ENCODE measurements at regions of chr11 and their contacts with region 1.

Region 1: GRCh38 chr11:122642472-122642922 is 13.0 kb upstream of the UBASH3B start:
- DNase-seq: peak; percentile 41 to 98
- H3K4me3 ChIP-seq: peak overlapping the region; percentile 26; the same call in 1 of the 2 replicates
- H3K27ac ChIP-seq: peak overlapping the region; percentile 88
- H3K4me1 ChIP-seq: peaks cover 49% of the 10 kb centered on the region
- H3K27me3 ChIP-seq: no peaks in the 10 kb centered on the region
- CTCF ChIP-seq: no peak

Region 2: DNA sequence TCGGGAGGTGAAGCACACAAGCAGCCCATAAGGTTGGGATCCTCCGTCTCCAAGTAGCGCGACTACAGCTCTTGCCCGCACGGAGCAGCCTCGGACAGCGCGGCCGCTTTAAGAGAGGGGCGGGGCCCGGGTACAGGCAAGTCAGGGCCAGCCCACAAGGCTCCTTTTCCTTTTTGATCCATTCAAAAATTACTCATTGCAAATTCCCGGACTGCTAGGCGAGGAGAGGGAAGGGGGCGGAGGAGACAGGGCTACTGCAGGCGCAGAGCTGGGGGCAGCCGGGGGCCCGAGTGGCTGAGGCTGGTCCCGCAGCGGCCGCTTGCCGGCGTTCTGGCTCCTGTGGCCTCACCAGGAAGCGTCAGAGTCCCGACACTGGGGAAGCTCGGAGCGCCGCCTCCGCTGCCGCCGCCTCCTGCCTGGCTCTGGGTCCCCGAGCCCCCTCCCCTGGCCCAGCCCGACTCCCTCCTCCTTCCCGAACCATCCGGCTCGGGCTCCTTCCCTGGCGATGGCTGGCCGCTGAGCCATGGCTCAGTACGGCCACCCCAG is 13.1 kb after region 1 on chr11 and contains the start of gene UBASH3B:
- CTCF ChIA-PET with region 1: no interaction called
- POLR2A ChIA-PET with region 1: interaction called, 10 read pairs
- intact Hi-C with region 1: no loop called
- DNase-seq: peak; percentile 81 to 85
- H3K4me3 ChIP-seq: peak within 1 kb of the TSS; percentile 81
- H3K27ac ChIP-seq: peak within 1 kb of the TSS; percentile 91
- H3K4me1 ChIP-seq: peaks cover 42% of the 10 kb centered on the region
- H3K27me3 ChIP-seq: no peaks in the 10 kb centered on the region
- CTCF ChIP-seq: peak; percentile 19; the same call in 1 of the 2 replicates
- total RNA-seq, gene UBASH3B: 80.3 and 81.9 TPM in 2 replicates

Region 3: DNA sequence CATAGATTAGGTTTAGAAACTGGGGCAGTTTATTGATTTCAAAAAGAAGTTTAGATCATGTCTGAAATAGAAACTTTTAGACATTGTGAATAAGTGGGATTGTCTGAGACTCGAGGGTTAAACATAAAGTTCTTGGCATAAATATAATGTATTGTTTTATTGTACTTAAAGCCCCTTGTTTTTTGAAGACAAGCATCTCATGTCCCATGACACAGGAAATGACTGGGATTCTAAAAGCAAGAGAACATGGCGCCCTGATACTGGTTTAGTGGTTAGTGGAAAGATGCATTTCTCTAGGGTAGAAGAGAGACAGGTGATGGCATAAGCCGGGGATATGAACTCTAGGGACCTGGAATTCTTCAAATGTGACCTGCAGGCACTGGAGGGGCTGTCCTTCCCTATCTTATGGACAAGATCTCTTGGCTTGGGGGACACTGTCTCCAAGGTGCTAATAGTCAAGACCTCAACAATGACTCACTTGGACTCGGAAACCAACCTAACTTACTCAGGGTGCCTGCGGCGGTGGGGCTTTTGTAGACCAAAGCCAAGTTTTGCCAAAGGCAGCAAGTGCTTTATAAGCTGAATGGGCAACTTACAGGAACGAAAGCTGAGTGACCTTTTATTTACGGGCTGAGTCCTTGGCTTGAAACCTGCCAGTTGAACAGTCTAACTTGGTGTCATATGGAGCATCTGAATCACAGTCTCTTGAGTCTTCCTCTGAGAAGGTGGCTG is 61.2 kb after region 1 on chr11:
- CTCF ChIA-PET with region 1: no interaction called
- POLR2A ChIA-PET with region 1: no interaction called
- intact Hi-C with region 1: loop called (anchors 5 kb)
- DNase-seq: peak in 1 of 2 experiments; percentile 88
- H3K4me3 ChIP-seq: no peak overlapping the region
- H3K27ac ChIP-seq: peak overlapping the region; percentile 12; the same call in 1 of the 2 replicates
- H3K4me1 ChIP-seq: peaks cover 35% of the 10 kb centered on the region
- H3K27me3 ChIP-seq: no peaks in the 10 kb centered on the region
- CTCF ChIP-seq: no peak

Measured in PC-9 (cell line).